Activated T-helper 1 cell treated with anti-CD3 and anti-CD28 coated beads, Interleukin-12 subunit alpha, Interleukin-12 subunit beta, Interleukin-2, Interleukin-4 antibody, amounts not matched to agents 30 ng/mL and 10 ng/mL and 1 ng/mL, durations not matched to agents 14 hours and 24 hours and 36 hours (primary cell): ENCODE measurements at regions of chr5 and their contacts with region 1.

Region 1: GRCh38 chr5:43967165-43967564 is 364.2 kb downstream of the NNT start:
- DNase-seq: no peak
- H3K4me3 Mint-ChIP-seq: no peak overlapping the region
- H3K27ac Mint-ChIP-seq: no peak overlapping the region
- H3K4me1 Mint-ChIP-seq: no peaks in the 10 kb centered on the region
- H3K27me3 Mint-ChIP-seq: no peaks in the 10 kb centered on the region

Region 2: DNA sequence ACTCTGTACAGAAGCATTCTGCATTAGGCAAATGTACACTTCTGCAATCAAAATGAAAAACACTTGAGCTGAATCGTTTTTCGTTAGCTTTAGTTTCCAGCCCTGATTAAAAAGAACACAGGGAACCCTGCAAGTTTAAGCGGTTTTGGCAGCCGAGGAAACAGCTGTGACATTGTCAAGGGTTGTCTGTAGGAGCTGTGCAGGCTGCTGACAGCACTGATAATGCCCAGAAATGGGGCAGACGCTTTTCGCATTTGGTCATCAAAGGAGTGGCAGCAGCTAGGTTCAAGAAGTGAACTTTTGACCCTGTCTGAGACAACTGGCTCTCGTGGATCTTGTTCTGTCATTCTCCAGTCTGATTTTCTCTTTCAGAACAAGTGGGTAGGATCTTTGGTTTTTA is 1376.2 kb before region 1 on chr5:
- intact Hi-C with region 1: loop called (anchors 10 kb)
- DNase-seq: no peak
- H3K4me3 Mint-ChIP-seq: no peak overlapping the region
- H3K27ac Mint-ChIP-seq: no peak overlapping the region
- H3K4me1 Mint-ChIP-seq: no peaks in the 10 kb centered on the region
- H3K27me3 Mint-ChIP-seq: peaks cover 15% of the 10 kb centered on the region

Region 3: DNA sequence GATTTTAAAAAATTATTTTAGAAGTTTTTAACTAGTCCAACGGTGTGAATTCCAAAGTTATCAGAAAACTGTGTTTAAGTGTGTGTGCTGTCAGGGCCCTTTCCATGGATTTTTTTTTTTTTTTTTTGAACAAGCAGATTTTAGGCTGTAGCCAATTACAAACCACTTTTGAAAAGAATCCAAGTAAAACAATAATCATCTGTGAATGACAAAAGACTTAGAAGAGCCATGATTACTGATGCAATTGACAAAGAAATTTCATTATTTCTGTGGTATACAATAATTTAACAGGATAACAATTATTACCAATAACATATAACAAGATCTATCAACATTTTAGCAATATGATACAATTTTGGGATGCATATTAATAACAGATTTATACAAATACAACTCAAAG is 394.1 kb before region 1 on chr5:
- intact Hi-C with region 1: no loop called
- DNase-seq: no peak
- H3K4me3 Mint-ChIP-seq: no peak overlapping the region
- H3K27ac Mint-ChIP-seq: no peak overlapping the region
- H3K4me1 Mint-ChIP-seq: no peaks in the 10 kb centered on the region
- H3K27me3 Mint-ChIP-seq: no peaks in the 10 kb centered on the region